ENCODE measurements at regions of chr15 and their contacts with region 1.

Region 1: DNA sequence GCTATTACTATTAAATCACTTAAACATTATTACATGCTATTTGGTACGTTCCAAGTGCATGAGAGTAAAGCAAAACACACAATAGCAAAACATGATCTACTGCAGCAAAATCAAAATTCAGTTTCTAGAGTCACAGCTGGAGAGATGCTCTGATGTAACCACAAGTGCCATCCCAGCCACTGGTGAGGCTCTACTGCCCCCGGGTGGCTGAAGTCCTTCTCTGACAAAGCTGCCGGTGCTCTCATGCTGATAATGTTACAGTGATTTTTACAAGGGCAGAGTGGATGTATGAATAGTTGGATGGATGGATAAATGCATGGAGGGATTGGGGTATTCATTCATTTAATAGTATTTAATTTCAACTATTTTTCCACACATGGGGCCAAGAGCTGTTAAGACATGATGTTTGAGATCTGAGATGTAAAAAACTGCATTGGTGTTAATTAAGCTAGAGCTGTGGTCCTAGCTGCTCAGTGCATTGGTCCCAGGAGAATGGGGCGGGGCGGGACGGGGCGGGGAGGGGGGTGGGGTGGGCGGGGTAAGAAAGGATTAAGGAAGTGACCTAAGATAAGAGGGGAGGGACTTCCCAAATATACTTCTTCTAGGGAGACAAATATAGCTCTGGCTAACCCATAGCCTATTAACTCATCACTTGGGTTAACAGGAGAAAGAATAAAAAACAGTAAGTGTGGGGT is 5.3 kb upstream of the SPESP1 start:
- DNase-seq: peak; percentile 58 to 83
- H3K4me3 ChIP-seq: no peak overlapping the region
- H3K27ac ChIP-seq: no peak overlapping the region
- H3K4me1 ChIP-seq: no peaks in the 10 kb centered on the region
- H3K27me3 ChIP-seq: no peaks in the 10 kb centered on the region
- CTCF ChIP-seq: peak; percentile 84 to 93 (median 92)
- EP300 ChIP-seq: no peak
- POLR2A ChIP-seq: no peak
- RAD21 ChIP-seq: peak; percentile 98 to 100

Region 2: GRCh38 chr15:68559345-68560310 is 365.4 kb before region 1 on chr15:
- CTCF ChIA-PET with region 1: interaction called, 53 read pairs
- POLR2A ChIA-PET with region 1: no interaction called
- DNase-seq: peak; percentile 80 to 95
- H3K4me3 ChIP-seq: peak overlapping the region; percentile 36 to 68 (median 52)
- H3K27ac ChIP-seq: no peak overlapping the region
- H3K4me1 ChIP-seq: peaks cover 0 to 22% (median 16%) of the 10 kb centered on the region in 4 experiments; a peak in 6 of 7 replicates
- H3K27me3 ChIP-seq: peaks cover 0 to 7% (median 4%) of the 10 kb centered on the region in 4 experiments; a peak in 3 of 7 replicates
- CTCF ChIP-seq: peak; percentile 86 to 93 (median 90)
- EP300 ChIP-seq: no peak
- POLR2A ChIP-seq: peak in 1 of 2 experiments; percentile 41; a peak in 1 of 3 replicates
- RAD21 ChIP-seq: peak; percentile 78 to 86

Region 3: DNA sequence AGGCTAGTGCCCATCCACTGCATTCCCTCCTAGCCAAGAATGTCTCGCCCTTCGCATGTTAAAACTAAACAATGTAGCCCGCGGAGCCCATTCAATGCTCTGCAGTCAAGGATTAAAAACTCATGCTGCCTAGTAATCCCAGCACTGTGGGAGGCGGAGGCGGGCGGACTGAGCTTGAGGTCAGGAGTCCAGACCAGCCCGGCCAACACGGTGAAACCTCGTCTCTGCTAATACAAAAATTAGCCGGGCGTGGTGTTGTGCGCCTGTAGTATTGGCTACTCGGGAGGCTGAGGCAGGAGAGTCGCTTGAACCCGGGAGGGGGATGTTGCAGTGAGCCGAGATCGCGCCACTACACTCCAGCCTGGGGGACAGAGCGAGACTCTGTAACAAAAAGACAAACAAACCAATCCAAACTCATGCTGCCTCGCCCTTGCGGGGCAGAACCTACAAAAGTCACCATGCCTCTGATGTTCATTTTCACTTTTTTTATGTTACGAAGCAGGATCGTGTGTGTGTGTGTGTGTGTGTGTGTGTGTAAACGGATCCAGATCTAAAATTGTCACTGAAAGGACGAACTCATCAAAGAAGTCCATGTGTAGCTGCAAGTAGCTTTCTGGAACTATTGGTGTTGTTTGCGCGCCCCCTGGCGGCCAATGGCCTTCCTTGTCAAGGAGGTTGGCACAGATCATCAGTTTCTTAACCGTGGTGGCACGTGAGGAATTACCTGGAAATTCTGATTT is 49.5 kb before region 1 on chr15:
- CTCF ChIA-PET with region 1: interaction called, 32 read pairs
- POLR2A ChIA-PET with region 1: no interaction called
- DNase-seq: peak; percentile 91 to 97
- H3K4me3 ChIP-seq: peak overlapping the region; percentile 24 to 65 (median 50); a peak in 7 of 8 replicates
- H3K27ac ChIP-seq: no peak overlapping the region
- H3K4me1 ChIP-seq: peaks cover 2 to 3% (median 2%) of the 10 kb centered on the region in 4 experiments; a peak in 4 of 7 replicates
- H3K27me3 ChIP-seq: peaks cover 0 to 8% (median 1%) of the 10 kb centered on the region in 4 experiments; a peak in 4 of 7 replicates
- CTCF ChIP-seq: peak; percentile 83 to 90 (median 89)
- EP300 ChIP-seq: no peak
- POLR2A ChIP-seq: no peak; a peak in 1 of 3 replicates
- RAD21 ChIP-seq: peak; percentile 94 to 95

Region 4: GRCh38 chr15:68909601-68910100 is 15.4 kb before region 1 on chr15:
- CTCF ChIA-PET with region 1: interaction called, 22 read pairs
- POLR2A ChIA-PET with region 1: no interaction called
- DNase-seq: no peak
- H3K4me3 ChIP-seq: no peak overlapping the region
- H3K27ac ChIP-seq: no peak overlapping the region
- H3K4me1 ChIP-seq: no peaks in the 10 kb centered on the region
- H3K27me3 ChIP-seq: no peaks in the 10 kb centered on the region
- CTCF ChIP-seq: no peak
- EP300 ChIP-seq: no peak
- POLR2A ChIP-seq: no peak
- RAD21 ChIP-seq: no peak

Region 5: GRCh38 chr15:69056364-69056763 is 131.4 kb after region 1 on chr15:
- CTCF ChIA-PET with region 1: no interaction called
- POLR2A ChIA-PET with region 1: no interaction called
- DNase-seq: no peak
- H3K4me3 ChIP-seq: no peak overlapping the region
- H3K27ac ChIP-seq: no peak overlapping the region
- H3K4me1 ChIP-seq: peaks cover 3 to 8% (median 5%) of the 10 kb centered on the region in 4 experiments
- H3K27me3 ChIP-seq: no peaks in the 10 kb centered on the region; a peak in 1 of 7 replicates
- CTCF ChIP-seq: peak in 1 of 3 experiments; percentile 2; a peak in 1 of 4 replicates
- EP300 ChIP-seq: no peak
- POLR2A ChIP-seq: no peak
- RAD21 ChIP-seq: peak in 1 of 2 experiments; percentile 35; a peak in 2 of 4 replicates

Region 6: GRCh38 chr15:69194025-69194827 is 269.2 kb after region 1 on chr15:
- CTCF ChIA-PET with region 1: no interaction called
- POLR2A ChIA-PET with region 1: no interaction called
- DNase-seq: no peak
- H3K4me3 ChIP-seq: no peak overlapping the region
- H3K27ac ChIP-seq: no peak overlapping the region
- H3K4me1 ChIP-seq: peaks cover 0 to 6% (median 3%) of the 10 kb centered on the region in 4 experiments; a peak in 3 of 7 replicates
- H3K27me3 ChIP-seq: no peaks in the 10 kb centered on the region
- CTCF ChIP-seq: no peak
- EP300 ChIP-seq: no peak
- POLR2A ChIP-seq: no peak
- RAD21 ChIP-seq: no peak